Activated CD8-positive, alpha-beta T cell treated with anti-CD3 and anti-CD28 coated beads for 36 hours (primary cell): ENCODE measurements at regions of chr6 and their contacts with region 1.

Region 1: GRCh38 chr6:133854364-133855275 is 34.3 kb upstream of the TCF21 start:
- DNase-seq: peak; percentile 9
- ATAC-seq: no peak
- H3K4me3 Mint-ChIP-seq: no peak overlapping the region
- H3K27ac Mint-ChIP-seq: no peak overlapping the region
- H3K4me1 Mint-ChIP-seq: peaks cover 8% of the 10 kb centered on the region
- H3K27me3 Mint-ChIP-seq: peaks cover 54% of the 10 kb centered on the region
- CTCF ChIP-seq: no peak

Region 2: DNA sequence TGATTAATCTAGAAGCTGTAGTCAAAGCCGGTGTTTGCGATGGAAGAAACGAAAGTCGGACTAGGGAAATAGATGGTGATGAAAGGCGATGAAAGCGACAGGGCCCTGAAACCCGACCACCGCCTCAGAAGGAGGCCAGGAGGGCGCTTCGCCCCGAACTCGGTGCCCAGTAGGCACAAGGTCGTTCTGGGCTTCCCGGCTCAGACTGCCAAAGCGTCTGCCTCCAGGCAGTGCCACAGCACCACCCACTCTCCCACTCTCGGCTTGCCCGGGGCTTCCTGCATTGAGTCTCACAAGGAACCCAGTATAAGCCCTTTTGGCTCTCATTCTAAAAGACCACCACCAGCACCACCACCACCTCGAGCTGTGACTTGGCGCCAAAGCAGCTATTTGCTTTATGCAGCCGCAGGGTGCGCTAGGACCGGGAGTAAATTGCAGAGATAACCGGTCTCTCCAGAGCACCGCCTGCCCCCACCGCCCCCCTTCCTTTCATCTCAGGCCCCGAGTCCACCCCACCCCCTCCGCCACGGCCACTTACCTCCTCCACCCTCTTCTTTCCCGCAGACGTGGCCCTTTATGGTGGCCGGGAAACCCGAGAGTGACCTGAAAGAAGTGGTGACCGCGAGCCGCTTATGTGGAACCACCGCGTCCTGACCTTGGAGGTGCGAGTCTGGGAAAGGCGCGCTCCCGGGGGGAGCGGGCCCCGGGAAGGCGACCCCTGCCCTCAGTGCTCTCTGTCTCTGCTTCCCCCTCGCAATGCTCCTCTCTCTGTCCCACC is 36.7 kb after region 1 on chr6:
- CTCF ChIA-PET with region 1: no interaction called
- POLR2A ChIA-PET with region 1: no interaction called
- intact Hi-C with region 1: loop called (anchors 5 kb)
- DNase-seq: peak; percentile 40
- ATAC-seq: peak; percentile 54
- H3K4me3 Mint-ChIP-seq: peak overlapping the region; percentile 55
- H3K27ac Mint-ChIP-seq: no peak overlapping the region
- H3K4me1 Mint-ChIP-seq: peaks cover 33% of the 10 kb centered on the region
- H3K27me3 Mint-ChIP-seq: peaks cover 79% of the 10 kb centered on the region
- CTCF ChIP-seq: no peak